Activated CD4-positive, alpha-beta T cell treated with anti-CD3 and anti-CD28 coated beads for 36 hours (primary cell): ENCODE measurements at regions of chr21 and their contacts with region 1.

Region 1: DNA sequence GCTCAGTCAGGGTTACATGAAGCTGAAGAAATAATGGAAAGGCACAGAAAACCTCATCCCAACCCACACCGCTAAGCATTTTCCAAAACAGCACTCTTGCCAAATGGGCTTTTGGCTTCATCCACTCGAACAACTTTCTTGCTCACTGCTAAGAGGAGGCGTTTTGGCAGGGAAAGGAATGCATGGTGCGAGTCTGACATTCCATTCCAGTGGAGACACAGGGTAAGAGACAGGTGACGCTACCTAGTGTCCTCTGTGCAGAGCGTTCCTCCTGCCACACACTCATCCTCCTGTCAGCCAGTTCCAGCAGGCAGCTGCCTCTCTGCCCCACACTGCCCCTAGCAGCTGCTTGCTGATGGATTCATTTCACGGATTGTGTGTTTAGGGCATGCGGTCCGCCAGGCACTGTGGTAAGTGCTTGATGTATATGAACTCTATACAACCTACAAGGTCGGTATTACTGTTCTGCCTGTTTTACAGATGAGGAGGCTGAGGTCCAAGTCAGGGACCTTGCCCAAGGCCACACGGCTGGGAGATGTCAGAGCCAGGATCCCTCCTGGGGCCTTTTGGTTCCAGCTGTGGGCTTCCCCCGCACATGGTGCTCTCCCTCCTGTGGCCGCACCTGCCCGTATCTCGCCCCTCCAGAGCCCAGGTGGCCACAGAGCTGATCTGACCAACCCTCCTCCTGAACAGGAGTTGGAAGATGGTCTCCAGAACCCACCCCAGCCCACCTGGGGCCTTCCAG is 25.7 kb upstream of the BACE2 start:
- DNase-seq: no peak
- ATAC-seq: no peak
- H3K4me3 Mint-ChIP-seq: no peak overlapping the region
- H3K27ac Mint-ChIP-seq: no peak overlapping the region
- H3K4me1 Mint-ChIP-seq: no peaks in the 10 kb centered on the region
- H3K27me3 Mint-ChIP-seq: peaks cover 6% of the 10 kb centered on the region

Region 2: GRCh38 chr21:40985370-40985769 is 156.9 kb before region 1 on chr21:
- CTCF ChIA-PET with region 1: no interaction called
- POLR2A ChIA-PET with region 1: no interaction called
- intact Hi-C with region 1: loop called in 1 of 2 experiments (anchors 5 kb)
- DNase-seq: no peak
- ATAC-seq: no peak
- H3K4me3 Mint-ChIP-seq: no peak overlapping the region
- H3K27ac Mint-ChIP-seq: no peak overlapping the region
- H3K4me1 Mint-ChIP-seq: no peaks in the 10 kb centered on the region
- H3K27me3 Mint-ChIP-seq: no peaks in the 10 kb centered on the region